ENCODE measurements at regions of chr5 and their contacts with region 1.

Region 1: DNA sequence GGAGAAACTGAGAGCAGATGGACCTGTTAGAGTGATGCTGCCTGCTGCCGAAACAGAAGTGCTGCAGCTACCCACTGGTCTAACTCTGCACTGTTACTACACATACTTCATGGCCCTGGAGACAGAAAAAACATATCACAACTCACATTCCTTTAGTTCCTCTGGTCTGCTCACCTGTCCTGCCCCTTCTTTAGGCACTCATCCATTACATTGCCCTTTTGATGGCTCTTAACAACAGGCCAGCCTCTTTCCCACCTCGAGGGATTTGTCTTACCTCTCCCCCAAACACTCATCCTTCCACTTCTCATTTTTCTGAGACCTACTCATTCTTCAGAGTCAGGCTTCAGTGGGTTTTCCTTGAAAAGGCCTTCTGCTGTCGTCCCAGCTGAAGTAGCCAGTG is 49.2 kb downstream of the KCTD16 start:
- DNase-seq: peak; percentile 79 to 82
- H3K4me3 ChIP-seq: no peak overlapping the region
- H3K27ac ChIP-seq: peak overlapping the region; percentile 45 to 80 (median 69)
- H3K4me1 ChIP-seq: peaks cover 8 to 16% of the 10 kb centered on the region in 2 donors
- H3K27me3 ChIP-seq: no peaks in the 10 kb centered on the region
- CTCF ChIP-seq: no peak
- POLR2A ChIP-seq: peak in 1 of 2 donors; percentile 50

Region 2: GRCh38 chr5:144385597-144385996 is 165.7 kb after region 1 on chr5:
- intact Hi-C with region 1: loop called (anchors 10 kb)
- DNase-seq: no peak
- H3K4me3 ChIP-seq: no peak overlapping the region
- H3K27ac ChIP-seq: no peak overlapping the region
- H3K4me1 ChIP-seq: peaks cover 0 to 3% of the 10 kb centered on the region in 2 donors
- H3K27me3 ChIP-seq: no peaks in the 10 kb centered on the region
- CTCF ChIP-seq: no peak
- POLR2A ChIP-seq: no peak

Measured in thyroid gland (tissue), 4 donors.